Left cardiac atrium (tissue), 4 donors: ENCODE measurements at regions of chr1 and their contacts with region 1.

Region 1: GRCh38 chr1:154974063-154974807 is at the start of gene CKS1B:
- DNase-seq: peak; percentile 97
- ATAC-seq: peak; percentile 86 to 90
- total RNA-seq, gene CKS1B: 26.9 to 33.8 TPM

Region 2: GRCh38 chr1:155001675-155002463 is 27.6 kb after region 1 on chr1:
- intact Hi-C with region 1: loop called in 1 of 2 experiments (anchors 2 kb)
- DNase-seq: peak; percentile 100
- ATAC-seq: peak; percentile 84 to 86

Region 3: DNA sequence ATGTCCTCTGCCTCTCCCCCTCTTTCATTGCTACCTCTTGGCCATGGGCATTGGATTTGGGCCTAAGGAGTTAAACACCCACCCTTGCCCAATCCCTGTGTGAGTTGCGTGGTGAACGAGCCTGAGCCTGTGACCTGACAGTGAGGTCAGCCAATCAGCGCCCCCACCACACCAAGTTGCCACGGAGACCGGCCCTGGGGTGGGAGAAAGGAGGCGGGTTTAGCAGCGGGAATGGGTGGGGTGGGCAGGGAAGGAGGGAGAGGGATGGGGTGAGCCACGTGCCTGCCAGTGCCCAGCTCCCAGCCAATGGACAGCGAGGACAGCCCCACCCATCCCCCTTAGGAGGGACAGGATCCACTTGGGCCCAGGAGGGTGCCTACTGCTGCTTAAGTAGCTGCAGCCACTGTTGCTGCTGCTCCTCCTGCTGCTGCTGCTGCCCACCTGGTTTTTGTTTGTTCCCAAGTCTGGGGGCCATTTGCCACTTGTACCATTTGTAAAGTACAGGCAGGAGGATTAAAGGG is 37.9 kb after region 1 on chr1:
- intact Hi-C with region 1: no loop called
- DNase-seq: peak; percentile 80
- ATAC-seq: peak; percentile 42 to 57

Region 4: GRCh38 chr1:155026593-155026992 is 52.4 kb after region 1 on chr1:
- intact Hi-C with region 1: no loop called
- DNase-seq: no peak
- ATAC-seq: no peak